ENCODE measurements at regions of chr18 and their contacts with region 1.

Region 1: DNA sequence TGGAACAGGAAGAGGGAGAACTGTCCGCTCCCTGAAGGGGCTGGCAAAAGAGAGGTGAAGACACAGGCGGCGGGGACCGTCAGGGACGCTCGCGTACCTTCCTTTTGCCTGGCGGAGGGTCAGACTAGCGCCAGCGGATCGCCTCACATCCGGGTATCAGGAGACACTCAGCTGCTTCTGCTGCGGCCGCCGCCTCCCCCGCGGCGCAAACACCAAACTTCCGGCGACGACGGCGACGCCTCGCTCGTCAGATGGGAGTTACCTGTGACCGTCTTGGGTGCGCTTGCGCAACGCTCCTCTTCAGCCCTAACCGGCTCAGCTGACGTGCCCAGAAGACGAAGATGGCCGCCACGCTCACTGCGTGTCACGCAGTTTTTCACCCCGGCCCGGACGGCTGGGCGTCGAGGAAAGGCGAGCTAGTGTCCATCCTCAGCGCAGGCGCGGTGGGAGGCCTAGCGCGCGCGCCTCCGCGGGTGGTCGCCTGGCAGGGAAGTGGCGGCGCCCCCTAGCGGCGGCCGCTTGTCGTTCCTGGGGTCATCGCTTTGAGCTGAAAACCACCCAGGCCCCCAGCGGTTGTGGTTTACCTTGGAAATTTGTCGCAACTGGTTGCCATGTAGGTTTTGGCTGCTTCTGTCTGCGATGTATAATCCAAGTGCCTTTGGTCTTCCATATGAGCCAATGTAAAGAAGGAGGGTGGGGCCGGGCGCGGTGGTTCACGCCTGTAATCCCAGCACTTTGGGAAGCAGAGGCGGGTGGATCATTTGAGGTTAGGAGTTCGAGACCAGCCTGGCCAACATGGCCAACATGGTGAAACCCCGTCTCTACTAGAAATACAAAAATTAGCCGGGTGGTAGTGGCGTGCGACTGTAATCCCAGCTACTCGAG is at the start of gene ESCO1:
- DNase-seq: peak; percentile 95
- CTCF ChIP-seq: peak; percentile 87

Region 2: DNA sequence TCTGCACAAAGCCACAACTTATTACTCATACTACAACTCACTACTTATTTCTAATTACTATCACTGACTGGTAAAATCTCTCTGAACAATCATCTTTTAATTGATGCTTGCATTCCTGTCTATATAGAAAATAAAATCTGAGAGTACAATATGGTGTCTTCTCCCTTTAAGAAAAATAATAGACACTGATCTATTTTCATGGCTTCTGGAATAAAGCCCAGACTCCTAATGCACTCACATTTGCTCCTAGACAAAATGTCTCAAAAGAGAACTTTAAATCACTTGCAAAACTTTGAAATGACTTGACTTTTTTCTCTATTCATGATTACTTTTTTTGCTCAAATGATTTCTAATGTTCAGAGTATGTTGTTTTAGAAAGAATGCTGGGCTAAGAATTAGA is 29.0 kb before region 1 on chr18:
- CTCF ChIA-PET with region 1: interaction called, 19 read pairs
- POLR2A ChIA-PET with region 1: interaction called, 3 read pairs
- DNase-seq: no peak
- CTCF ChIP-seq: no peak

Region 3: DNA sequence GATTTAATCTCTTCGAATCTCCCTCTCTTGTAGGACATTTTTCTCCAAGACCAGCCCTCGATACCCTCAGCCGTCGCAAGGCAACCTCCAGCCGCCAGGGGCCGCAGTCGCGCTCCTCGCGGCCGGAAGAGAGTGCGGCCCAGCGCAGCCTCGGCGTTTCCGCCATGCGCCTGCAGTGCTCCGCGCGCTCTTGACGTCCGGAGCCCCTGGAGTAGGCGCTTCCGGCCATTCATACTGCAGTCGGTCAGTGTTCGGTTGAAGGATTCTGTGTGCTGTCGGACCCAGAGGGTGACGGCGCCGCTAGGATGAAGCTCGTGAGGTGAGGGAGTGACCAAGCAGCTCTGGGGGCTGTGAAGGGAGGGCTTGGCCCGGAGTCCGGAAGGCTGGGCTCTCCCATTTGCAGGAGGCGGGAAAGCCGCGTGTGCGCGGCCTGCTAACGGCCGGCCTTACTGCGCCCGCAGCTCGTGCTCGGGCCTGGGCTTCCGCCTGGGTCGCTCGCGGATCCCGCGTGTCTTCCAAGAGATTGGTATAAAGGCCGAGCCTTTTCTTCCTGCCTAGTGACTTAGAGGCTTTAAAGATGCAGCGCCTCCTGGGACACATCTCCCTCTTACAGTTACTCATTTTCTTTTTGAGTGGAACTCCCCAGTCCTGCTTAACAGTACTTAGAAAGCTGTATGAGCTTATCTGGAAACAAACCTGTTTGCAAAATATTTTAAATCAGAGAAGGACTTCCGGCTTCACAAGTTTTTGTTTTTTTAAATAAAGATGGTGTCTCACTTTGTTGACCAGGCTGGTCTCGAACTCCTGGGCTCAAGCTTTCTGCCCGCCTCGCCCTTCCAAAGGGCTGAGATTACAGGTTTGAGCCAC is 11.6 kb after region 1 on chr18 and contains the start of gene SNRPD1:
- CTCF ChIA-PET with region 1: interaction called, 124 read pairs
- POLR2A ChIA-PET with region 1: interaction called, 5 read pairs
- DNase-seq: peak; percentile 93
- CTCF ChIP-seq: peak; percentile 99

Region 4: DNA sequence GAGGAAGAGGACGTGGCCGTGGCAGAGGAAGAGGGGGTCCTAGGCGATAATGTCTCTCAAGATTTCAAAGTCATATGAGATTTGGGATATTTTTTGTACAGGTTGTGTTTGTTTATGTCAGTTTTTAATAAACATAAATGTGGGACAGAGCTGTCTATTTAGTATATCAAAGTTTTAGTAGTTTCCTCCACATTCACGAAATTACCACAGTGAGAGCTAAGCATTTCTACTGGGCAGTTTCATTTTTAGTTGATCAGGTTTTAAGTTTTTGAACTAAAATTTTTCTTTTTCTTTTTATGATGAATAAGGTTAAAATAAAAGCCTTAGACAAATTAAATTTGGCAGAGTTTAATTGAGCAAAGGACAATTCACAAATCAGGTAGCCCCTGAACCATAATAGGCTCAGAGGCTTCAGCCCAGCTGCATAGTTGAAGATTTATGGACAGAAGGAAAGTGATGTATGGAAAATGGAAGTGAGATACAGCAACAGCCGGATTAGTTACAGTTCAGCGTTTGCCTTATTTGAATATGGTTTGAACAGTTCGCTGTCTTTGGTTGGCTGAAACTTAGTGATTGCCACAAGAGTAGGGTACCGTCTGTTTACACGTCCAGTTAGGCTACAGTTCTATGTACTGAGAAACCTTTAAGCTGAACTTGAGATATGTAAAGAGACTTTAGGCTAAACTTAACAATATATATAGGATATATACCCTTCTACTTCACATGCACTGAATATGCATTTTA is 28.5 kb after region 1 on chr18:
- CTCF ChIA-PET with region 1: interaction called, 10 read pairs
- POLR2A ChIA-PET with region 1: interaction called, 4 read pairs
- DNase-seq: peak; percentile 24
- CTCF ChIP-seq: no peak

Region 5: DNA sequence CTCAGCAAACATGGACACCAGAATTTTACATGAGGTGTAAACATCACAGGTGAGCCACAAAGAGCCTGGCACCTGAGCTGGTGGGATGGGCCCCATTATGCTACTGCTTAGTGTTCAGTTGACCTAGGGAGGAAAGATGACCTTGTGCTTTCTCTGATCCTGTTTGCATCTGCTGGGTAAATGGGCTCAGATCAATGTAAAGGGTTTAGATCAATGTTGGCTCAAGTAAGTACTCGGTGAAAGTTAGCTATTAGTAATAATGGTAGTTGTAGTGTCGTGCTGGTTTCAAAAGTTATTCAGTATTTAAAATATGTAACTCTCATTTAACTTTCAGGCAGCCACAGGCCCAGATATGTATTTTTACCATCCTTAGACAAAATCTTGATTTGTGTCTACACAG is 84.0 kb after region 1 on chr18:
- CTCF ChIA-PET with region 1: interaction called, 12 read pairs
- POLR2A ChIA-PET with region 1: no interaction called
- DNase-seq: peak; percentile 39
- CTCF ChIP-seq: no peak

Region 6: GRCh38 chr18:21865793-21866192 is 265.0 kb after region 1 on chr18:
- CTCF ChIA-PET with region 1: no interaction called
- POLR2A ChIA-PET with region 1: no interaction called
- DNase-seq: no peak
- CTCF ChIP-seq: no peak